Activated B cell treated with CpG ODN at 0.5 μM for 24 hours (primary cell): ENCODE measurements at regions of chr13 and their contacts with region 1.

Region 1: GRCh38 chr13:43030548-43030947 is 7.2 kb downstream of the DNAJC15 start:
- DNase-seq: no peak
- ATAC-seq: peak; percentile 96
- H3K4me3 Mint-ChIP-seq: peak overlapping the region; percentile 19
- H3K27ac Mint-ChIP-seq: peak overlapping the region; percentile 25
- H3K4me1 Mint-ChIP-seq: peaks cover 65% of the 10 kb centered on the region
- H3K27me3 Mint-ChIP-seq: no peaks in the 10 kb centered on the region
- CTCF ChIP-seq: no peak

Region 2: DNA sequence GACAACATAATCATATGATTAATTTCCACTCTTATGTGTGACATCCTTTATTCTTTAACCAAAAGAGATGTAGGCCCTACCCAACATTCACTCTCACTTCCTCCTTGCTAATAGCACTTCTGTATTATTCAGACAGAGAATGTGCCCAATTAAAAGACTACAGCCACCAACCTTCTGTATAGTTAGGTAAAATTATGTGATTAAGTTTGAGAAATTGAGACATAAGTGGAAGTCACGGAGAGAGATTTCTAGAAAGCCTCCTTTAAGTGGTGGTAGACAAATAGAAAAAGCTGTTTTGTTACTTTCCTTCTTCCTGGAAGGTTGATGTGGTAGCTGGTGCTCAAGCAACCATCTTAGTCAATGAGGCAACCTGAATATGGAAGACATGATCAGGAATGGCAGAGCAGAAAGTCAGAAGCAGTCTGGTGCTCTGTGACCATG is 53.3 kb before region 1 on chr13:
- CTCF ChIA-PET with region 1: no interaction called
- POLR2A ChIA-PET with region 1: no interaction called
- intact Hi-C with region 1: loop called (anchors 1 kb)
- DNase-seq: no peak
- ATAC-seq: peak; percentile 97
- H3K4me3 Mint-ChIP-seq: peak overlapping the region; percentile 7
- H3K27ac Mint-ChIP-seq: peak overlapping the region; percentile 42
- H3K4me1 Mint-ChIP-seq: peaks cover 25% of the 10 kb centered on the region
- H3K27me3 Mint-ChIP-seq: no peaks in the 10 kb centered on the region
- CTCF ChIP-seq: no peak